Activated CD4-positive, alpha-beta T cell treated with anti-CD3 and anti-CD28 coated beads, Interleukin-2, amount 10 ng/mL, durations not matched to agents 24 days and 14 days (primary cell): ENCODE measurements at regions of chr1 and their contacts with region 1.

Region 1: GRCh38 chr1:91500756-91501522 is at the start of gene CDC7:
- DNase-seq: peak; percentile 95
- H3K4me3 Mint-ChIP-seq: no peak within 1 kb of the TSS
- H3K27ac Mint-ChIP-seq: no peak within 1 kb of the TSS
- H3K4me1 Mint-ChIP-seq: peaks cover 28% of the 10 kb centered on the region
- H3K27me3 Mint-ChIP-seq: no peaks in the 10 kb centered on the region
- total RNA-seq, gene CDC7: 21.4 and 22.3 TPM in 2 replicates

Region 2: GRCh38 chr1:91021686-91022517 is 479.0 kb before region 1 on chr1 and contains the start of gene ZNF644:
- intact Hi-C with region 1: loop called (anchors 5 kb)
- DNase-seq: peak; percentile 96
- H3K4me3 Mint-ChIP-seq: peak within 1 kb of the TSS; percentile 96
- H3K27ac Mint-ChIP-seq: peak within 1 kb of the TSS; percentile 100
- H3K4me1 Mint-ChIP-seq: peaks cover 42% of the 10 kb centered on the region
- H3K27me3 Mint-ChIP-seq: peaks cover under 1% of the 10 kb centered on the region
- total RNA-seq, gene ZNF644: 57.0 and 57.7 TPM in 2 replicates

Region 3: DNA sequence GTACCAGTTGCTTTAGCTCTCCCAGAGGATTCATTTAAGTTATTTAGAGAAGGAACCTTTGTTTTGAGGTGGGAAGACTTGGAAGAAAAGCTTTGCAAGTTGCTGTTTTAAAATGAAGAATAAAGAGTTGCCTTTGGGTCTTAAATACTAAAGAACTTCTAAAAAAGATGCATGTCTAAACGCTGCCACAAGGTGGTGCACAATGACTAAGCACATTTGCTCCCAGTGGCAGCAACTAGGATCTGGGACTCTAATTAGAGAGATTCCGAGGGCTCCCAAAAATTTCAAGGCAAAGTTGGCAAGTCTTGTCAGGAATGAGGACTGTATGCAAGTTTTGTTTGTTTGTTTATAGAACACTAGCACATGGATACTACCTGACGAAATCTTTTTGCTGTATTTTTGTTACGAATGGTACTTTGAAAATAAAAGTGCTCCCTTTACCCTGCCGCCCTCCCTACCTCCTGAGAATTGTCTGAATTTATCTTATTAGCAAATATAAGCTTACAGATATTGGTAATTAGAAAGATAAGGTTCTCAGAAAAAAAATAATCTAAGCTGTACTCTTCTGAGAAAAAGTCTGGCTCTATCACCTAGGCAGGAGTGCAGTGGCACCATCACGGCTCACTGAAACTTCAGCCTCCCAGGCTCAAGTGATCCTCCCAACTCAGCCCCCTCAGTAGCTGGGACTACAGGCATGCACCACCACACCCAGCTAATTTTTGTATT is 218.1 kb before region 1 on chr1:
- intact Hi-C with region 1: loop called (anchors 5 kb)
- DNase-seq: peak; percentile 79
- H3K4me3 Mint-ChIP-seq: no peak overlapping the region
- H3K27ac Mint-ChIP-seq: no peak overlapping the region
- H3K4me1 Mint-ChIP-seq: no peaks in the 10 kb centered on the region
- H3K27me3 Mint-ChIP-seq: peaks cover 10% of the 10 kb centered on the region

Region 4: DNA sequence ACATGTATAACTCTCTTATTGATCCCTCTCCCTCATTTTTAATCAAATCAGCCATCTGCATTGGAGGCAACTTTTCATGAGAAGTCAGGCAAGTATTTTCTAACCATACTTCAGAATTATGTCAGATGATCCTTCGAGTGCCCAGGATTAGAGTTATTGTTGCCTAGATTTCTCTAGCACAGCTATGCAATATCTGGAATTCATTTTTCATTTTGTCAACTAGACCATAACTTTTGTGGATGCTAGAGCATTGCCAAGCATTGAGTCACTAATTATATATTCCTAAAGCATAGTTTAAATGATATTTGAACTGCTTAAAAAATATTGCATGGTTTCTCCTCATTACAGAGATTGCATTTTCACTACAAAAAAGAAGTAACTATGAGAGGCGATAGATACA is 117.5 kb before region 1 on chr1:
- intact Hi-C with region 1: no loop called
- DNase-seq: no peak
- H3K4me3 Mint-ChIP-seq: no peak overlapping the region
- H3K27ac Mint-ChIP-seq: no peak overlapping the region
- H3K4me1 Mint-ChIP-seq: no peaks in the 10 kb centered on the region
- H3K27me3 Mint-ChIP-seq: peaks cover 29% of the 10 kb centered on the region

Region 5: GRCh38 chr1:91885716-91886506 is 385.0 kb after region 1 on chr1 and contains the start of gene TGFBR3:
- intact Hi-C with region 1: loop called (anchors 10 kb)
- DNase-seq: peak; percentile 91
- H3K4me3 Mint-ChIP-seq: peak within 1 kb of the TSS; percentile 92
- H3K27ac Mint-ChIP-seq: peak within 1 kb of the TSS; percentile 59
- H3K4me1 Mint-ChIP-seq: peaks cover 32% of the 10 kb centered on the region
- H3K27me3 Mint-ChIP-seq: peaks cover 27% of the 10 kb centered on the region
- total RNA-seq, gene TGFBR3: 5.3 and 7.4 TPM in 2 replicates

Region 6: GRCh38 chr1:92298573-92299476 is 797.9 kb after region 1 on chr1 and contains the starts of genes GLMN and RPAP2:
- intact Hi-C with region 1: loop called (anchors 5 kb)
- DNase-seq: peak; percentile 94
- H3K4me3 Mint-ChIP-seq: peak within 1 kb of the TSS; percentile 99
- H3K27ac Mint-ChIP-seq: peak within 1 kb of the TSS; percentile 99
- H3K4me1 Mint-ChIP-seq: peaks cover 40% of the 10 kb centered on the region
- H3K27me3 Mint-ChIP-seq: no peaks in the 10 kb centered on the region
- total RNA-seq, gene GLMN: 24.2 and 28.5 TPM in 2 replicates
- total RNA-seq, gene RPAP2: 39.4 and 46.8 TPM in 2 replicates